RWPE1 (cell line): ENCODE measurements at regions of chr4 and their contacts with region 1.

Region 1: DNA sequence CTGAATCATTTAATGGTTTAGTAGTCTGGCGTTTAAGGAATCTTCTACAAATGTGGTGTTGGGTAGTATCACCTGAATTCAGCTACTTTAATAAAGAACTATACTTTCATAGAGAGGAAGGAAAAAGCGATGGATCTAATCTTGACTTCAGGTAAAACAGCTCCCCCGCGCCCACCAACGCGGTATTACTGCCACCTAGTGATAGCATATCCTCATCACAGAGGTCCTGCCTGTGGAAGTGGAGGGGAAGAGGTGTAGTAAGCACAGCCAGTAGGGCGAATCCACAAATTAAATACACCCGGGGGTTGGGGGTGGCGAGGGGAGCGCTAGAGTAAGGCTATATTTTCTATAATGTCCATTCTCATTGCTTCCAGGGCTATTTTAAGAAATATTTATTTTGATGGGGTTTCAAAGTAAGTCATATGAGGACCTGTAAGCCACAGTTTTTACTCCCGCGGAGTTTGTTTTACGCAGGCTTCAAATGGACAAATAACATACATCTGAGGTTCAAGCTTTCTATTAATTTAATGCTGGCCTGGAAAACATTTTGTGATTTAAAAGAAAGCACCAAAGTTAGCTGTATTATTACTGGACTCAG is 8.3 kb upstream of the DAPP1 start:
- DNase-seq: peak; percentile 76
- H3K27ac ChIP-seq: no peak overlapping the region
- CTCF ChIP-seq: peak; percentile 70

Region 2: GRCh38 chr4:99723612-99724011 is 84.7 kb before region 1 on chr4:
- CTCF ChIA-PET with region 1: interaction called, 11 read pairs
- POLR2A ChIA-PET with region 1: no interaction called
- DNase-seq: peak; percentile 82
- H3K27ac ChIP-seq: no peak overlapping the region
- CTCF ChIP-seq: no peak

Region 3: DNA sequence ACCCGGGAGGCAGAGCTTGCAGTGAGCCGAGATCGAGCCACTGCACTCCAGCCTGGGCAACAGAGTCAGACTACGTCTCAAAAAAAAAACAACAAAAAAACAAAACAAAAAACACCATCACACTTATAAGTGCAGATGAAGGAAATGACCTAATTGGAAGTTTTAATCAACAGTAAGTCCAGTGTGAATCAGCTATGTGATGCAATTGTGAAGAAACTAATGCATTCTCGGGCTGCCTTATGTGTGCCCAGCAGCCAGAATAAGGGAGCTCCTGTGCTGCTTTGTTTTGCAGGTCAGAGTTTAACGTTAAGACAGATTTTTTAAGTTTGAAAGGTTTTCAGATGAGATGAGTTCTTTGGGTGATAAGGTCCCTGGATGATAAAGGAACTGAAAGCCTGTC is 19.1 kb after region 1 on chr4:
- CTCF ChIA-PET with region 1: no interaction called
- POLR2A ChIA-PET with region 1: no interaction called
- DNase-seq: peak; percentile 12
- H3K27ac ChIP-seq: no peak overlapping the region
- CTCF ChIP-seq: no peak